ENCODE measurements at regions of chr12 and their contacts with region 1.

Region 1: DNA sequence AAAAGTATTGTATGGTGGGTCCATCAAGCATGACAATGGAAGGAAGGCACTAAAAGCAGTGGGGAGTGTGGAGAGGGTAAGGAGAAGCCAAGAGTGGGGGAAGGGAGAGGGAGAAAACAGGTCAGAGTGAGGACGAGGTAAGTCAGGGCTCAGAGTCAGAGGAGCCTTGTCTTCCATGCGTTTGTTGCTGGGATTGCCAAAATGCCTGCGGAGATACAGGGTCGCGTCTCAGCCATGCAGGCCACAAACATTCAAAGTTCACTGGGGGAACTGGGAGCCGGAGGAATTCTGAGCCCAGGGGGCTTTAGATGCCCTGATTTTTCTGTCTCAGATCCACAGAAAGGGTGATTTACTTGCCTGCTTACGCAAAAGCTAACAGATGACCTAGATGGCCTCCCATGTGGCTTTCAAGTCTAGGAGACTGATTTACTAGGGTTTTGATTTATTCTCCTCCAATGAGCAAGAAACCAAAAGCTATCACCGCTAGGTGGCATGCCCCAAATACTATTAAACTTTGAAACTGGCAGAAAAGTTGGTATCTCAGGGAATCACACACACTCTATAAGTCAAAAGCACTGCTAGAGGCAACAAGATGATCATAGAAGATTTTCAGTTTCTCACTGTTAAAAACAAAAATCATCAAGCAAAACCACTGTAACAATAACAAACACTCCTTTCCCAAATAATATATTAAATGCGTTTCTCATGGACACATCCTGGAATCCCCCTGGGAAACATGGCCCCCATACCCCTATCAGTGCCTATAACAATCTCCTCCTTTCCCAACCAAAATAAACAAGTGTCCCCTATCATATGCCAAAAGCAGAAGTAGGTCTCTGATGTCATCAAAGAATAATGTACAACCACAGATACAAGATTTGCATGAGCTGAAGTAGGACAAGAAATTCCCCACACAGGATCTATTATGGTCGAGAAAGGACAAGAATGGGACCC is 26.6 kb upstream of the MDM1 start:
- DNase-seq: peak; percentile 84
- ATAC-seq: peak; percentile 86
- H3K4me3 ChIP-seq: no peak overlapping the region
- H3K27ac ChIP-seq: no peak overlapping the region
- H3K4me1 ChIP-seq: peaks cover 4% of the 10 kb centered on the region; the same call in 1 of the 2 replicates
- H3K27me3 ChIP-seq: no peaks in the 10 kb centered on the region
- CTCF ChIP-seq: peak; percentile 86

Region 2: GRCh38 chr12:68406134-68406594 is 47.4 kb after region 1 on chr12:
- CTCF ChIA-PET with region 1: no interaction called
- POLR2A ChIA-PET with region 1: no interaction called
- intact Hi-C with region 1: loop called (anchors 1 kb)
- DNase-seq: peak; percentile 75
- ATAC-seq: peak; percentile 84
- H3K4me3 ChIP-seq: no peak overlapping the region
- H3K27ac ChIP-seq: no peak overlapping the region
- H3K4me1 ChIP-seq: peaks cover 23% of the 10 kb centered on the region
- H3K27me3 ChIP-seq: no peaks in the 10 kb centered on the region
- CTCF ChIP-seq: peak; percentile 62

Region 3: DNA sequence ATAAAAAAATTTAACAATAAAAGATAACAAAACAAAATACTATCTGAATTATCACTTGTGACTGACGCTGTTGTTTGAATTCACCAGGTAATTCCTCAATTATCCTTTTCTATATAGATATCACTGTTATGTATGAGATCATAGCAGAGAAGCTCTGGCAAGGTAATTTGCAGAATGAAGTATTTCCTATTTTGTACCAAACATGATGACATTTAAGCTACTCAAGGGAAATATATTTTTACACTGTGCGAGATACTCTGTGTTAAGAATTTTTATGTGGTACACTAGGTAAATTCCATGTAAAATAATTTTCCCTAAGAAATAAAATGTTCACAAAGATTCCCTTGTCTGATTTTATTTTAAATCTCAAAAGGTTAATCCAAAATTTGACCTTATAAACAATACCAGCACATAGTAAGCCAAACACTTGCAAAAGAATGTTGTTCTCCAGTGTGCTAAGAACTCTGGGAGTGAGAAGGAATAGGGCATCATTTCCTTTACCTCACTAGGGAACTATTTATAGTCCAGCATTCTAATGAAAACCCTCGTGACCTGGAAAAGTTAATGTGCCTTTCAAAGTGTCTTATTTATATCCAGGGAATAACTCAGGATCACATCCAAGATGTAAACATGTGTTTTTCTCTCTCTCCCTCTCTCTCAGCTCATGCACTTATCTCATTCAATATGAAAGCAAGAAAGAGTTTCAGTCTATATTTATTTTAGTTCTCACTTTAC is 136.7 kb after region 1 on chr12:
- CTCF ChIA-PET with region 1: no interaction called
- POLR2A ChIA-PET with region 1: interaction called, 6 read pairs
- intact Hi-C with region 1: loop called (anchors 1 kb)
- DNase-seq: no peak
- ATAC-seq: no peak
- H3K4me3 ChIP-seq: no peak overlapping the region
- H3K27ac ChIP-seq: no peak overlapping the region
- H3K4me1 ChIP-seq: no peaks in the 10 kb centered on the region
- H3K27me3 ChIP-seq: no peaks in the 10 kb centered on the region
- CTCF ChIP-seq: no peak

Region 4: GRCh38 chr12:68665016-68665569 is 306.3 kb after region 1 on chr12:
- CTCF ChIA-PET with region 1: no interaction called
- POLR2A ChIA-PET with region 1: no interaction called
- intact Hi-C with region 1: loop called (anchors 5 kb)
- DNase-seq: no peak
- ATAC-seq: peak; percentile 24; the same call in 1 of the 2 replicates
- H3K4me3 ChIP-seq: no peak overlapping the region
- H3K27ac ChIP-seq: no peak overlapping the region
- H3K4me1 ChIP-seq: no peaks in the 10 kb centered on the region
- H3K27me3 ChIP-seq: no peaks in the 10 kb centered on the region
- CTCF ChIP-seq: peak; percentile 22; the same call in 1 of the 2 replicates

Region 5: DNA sequence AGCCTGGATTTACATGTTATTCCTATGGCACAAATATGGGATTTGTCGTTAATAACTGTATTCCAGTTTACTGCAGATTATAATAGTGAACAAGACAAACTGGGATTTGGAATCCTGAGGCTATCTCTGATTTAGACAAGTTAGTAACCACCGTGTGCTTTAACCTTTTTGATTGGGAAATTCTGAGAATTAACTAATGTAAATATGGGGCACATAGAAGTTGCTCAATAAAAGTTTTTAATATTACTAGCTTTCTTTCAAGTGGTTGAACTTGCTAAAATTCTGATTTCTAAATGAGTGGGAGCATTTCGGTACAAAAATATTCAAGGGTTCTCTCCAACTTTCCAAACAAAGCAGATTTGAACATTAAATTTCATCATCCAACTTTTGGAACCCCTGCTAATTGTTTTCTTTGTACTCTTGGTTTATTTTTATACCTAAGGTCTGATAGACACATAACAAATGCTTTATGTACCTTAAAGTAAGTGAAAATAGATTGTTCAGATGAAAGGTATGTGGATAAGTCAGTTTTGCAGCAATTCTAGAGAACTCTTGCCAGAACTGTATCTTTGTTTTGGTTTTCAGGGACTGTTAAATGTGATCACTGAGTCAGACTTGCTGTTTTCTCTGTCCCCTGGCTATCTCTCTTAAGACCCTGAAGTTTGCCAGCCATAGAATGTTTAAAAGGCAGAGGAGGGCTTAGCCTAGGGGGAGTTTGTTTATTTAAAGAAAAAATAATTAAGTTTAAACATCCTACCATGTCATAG is 1168.9 kb after region 1 on chr12:
- CTCF ChIA-PET with region 1: no interaction called
- POLR2A ChIA-PET with region 1: no interaction called
- intact Hi-C with region 1: no loop called
- DNase-seq: peak; percentile 89
- ATAC-seq: peak; percentile 79
- H3K4me3 ChIP-seq: no peak overlapping the region
- H3K27ac ChIP-seq: peak overlapping the region; percentile 39
- H3K4me1 ChIP-seq: peaks cover 28% of the 10 kb centered on the region
- H3K27me3 ChIP-seq: no peaks in the 10 kb centered on the region
- CTCF ChIP-seq: no peak

Measured in PC-3 (cell line).